Esophagus muscularis mucosa (tissue), 4 donors: ENCODE measurements at regions of chr3 and their contacts with region 1.

Region 1: DNA sequence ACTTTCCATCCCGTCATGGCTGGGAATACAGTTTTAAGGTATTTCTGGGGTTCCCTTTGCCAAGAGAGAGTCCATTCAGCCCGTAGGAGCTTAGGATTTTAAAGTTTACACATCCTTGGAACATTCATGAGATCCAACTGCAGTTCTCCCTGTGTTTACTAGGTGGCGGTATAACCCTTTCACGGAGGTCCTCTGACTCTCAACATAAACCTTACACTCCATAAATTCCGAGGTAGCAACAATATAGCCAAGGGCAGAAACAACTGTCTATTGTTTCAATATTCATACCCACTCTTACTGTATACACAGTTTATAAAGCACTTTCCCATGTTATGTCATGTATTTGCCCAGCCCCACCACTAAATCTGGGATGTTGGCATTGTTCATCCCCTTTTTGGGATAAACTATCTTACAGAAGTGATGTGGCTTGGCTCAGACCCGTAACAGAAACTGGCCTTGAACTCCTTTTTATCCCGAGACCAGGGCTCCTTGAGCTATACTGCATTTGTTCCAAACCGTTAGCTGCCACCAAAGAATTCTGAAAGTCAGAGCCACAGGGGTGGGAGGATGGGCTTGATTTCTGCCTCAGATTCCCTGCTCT is 69.2 kb upstream of the COL6A5 start:
- DNase-seq: no peak
- H3K4me3 ChIP-seq: no peak overlapping the region
- H3K27ac ChIP-seq: no peak overlapping the region
- H3K4me1 ChIP-seq: peaks cover 0 to 9% (median 6%) of the 10 kb centered on the region in 4 donors
- H3K27me3 ChIP-seq: no peaks in the 10 kb centered on the region
- CTCF ChIP-seq: peak; percentile 71 to 81 (median 78)
- EP300 ChIP-seq: no peak
- POLR2A ChIP-seq: no peak

Region 2: DNA sequence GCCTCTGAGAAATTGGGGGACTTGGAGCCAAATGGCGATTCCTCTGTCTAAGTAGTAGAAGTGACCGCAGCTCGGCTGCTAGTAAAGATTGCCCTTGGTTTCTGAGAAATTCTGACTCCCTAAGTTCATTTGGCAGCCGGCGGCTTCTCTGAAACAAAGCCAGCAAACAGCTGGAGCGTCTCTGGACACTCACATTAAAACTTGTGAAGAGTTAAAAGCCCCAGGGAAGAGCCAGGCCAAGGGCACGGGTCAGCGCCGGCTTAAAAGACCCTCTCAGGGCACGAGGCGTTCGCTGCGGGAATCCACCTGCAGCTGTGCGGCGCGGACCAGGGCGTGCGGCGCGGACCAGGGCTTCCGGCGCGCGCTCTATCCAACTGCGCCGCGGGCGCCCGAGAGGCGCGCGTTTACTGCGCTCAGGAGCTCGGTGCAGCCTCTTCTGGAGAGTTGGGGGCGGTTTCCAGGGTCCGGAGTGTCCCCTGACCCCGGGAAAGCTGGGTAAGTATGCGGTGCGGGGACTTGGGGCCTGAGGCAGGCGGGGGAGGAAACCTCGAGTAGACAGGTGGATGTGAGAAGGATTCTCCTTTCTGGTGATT is 69.3 kb after region 1 on chr3 and contains the start of gene COL6A5:
- intact Hi-C with region 1: no loop called
- DNase-seq: no peak
- H3K4me3 ChIP-seq: peak within 1 kb of the TSS in 1 of 4 donors; percentile 14
- H3K27ac ChIP-seq: no peak within 1 kb of the TSS
- H3K4me1 ChIP-seq: peaks cover 0 to 9% (median 8%) of the 10 kb centered on the region in 4 donors
- H3K27me3 ChIP-seq: peaks cover 0 to 32% (median 0%) of the 10 kb centered on the region in 4 donors
- CTCF ChIP-seq: no peak
- EP300 ChIP-seq: no peak
- POLR2A ChIP-seq: no peak
- total RNA-seq, gene COL6A5: not detected

Region 3: GRCh38 chr3:130516645-130517512 is 240.6 kb after region 1 on chr3 and contains the start of gene COL6A6:
- intact Hi-C with region 1: no loop called
- DNase-seq: no peak
- H3K4me3 ChIP-seq: peak within 1 kb of the TSS in 3 of 4 donors; percentile 7 to 26 (median 22)
- H3K27ac ChIP-seq: no peak within 1 kb of the TSS
- H3K4me1 ChIP-seq: peaks cover 0 to 13% (median 11%) of the 10 kb centered on the region in 4 donors
- H3K27me3 ChIP-seq: peaks cover 0 to 34% (median 11%) of the 10 kb centered on the region in 4 donors
- CTCF ChIP-seq: no peak
- EP300 ChIP-seq: no peak
- POLR2A ChIP-seq: no peak
- total RNA-seq, gene COL6A6: under 0.01 to 0.17 (median 0.12) TPM

Region 4: DNA sequence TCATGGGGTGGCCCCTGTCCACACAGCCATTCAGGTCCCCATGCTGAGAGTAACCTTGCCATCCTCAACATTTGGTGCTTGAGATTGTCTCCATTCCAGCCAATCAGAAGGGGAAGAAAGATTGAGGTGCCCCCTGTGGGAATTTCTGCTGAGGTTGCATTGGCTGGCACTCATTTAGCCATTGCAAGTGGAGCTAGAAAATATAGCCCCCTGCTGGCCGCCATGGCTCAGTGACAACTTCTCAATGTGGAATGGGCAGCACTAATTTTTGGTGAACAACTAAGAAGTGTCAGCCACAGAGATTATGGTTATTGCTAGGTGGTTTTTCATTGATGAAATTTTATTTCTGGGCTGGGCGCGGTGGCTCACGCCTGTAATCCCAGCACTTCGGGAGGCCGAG is 262.7 kb after region 1 on chr3:
- intact Hi-C with region 1: loop called (anchors 1 kb)
- DNase-seq: no peak
- H3K4me3 ChIP-seq: no peak overlapping the region
- H3K27ac ChIP-seq: no peak overlapping the region
- H3K4me1 ChIP-seq: no peaks in the 10 kb centered on the region
- H3K27me3 ChIP-seq: no peaks in the 10 kb centered on the region
- CTCF ChIP-seq: peak; percentile 41 to 53 (median 43)
- EP300 ChIP-seq: no peak
- POLR2A ChIP-seq: no peak